ENCODE measurements at regions of chr1 and their contacts with region 1.

Region 1: DNA sequence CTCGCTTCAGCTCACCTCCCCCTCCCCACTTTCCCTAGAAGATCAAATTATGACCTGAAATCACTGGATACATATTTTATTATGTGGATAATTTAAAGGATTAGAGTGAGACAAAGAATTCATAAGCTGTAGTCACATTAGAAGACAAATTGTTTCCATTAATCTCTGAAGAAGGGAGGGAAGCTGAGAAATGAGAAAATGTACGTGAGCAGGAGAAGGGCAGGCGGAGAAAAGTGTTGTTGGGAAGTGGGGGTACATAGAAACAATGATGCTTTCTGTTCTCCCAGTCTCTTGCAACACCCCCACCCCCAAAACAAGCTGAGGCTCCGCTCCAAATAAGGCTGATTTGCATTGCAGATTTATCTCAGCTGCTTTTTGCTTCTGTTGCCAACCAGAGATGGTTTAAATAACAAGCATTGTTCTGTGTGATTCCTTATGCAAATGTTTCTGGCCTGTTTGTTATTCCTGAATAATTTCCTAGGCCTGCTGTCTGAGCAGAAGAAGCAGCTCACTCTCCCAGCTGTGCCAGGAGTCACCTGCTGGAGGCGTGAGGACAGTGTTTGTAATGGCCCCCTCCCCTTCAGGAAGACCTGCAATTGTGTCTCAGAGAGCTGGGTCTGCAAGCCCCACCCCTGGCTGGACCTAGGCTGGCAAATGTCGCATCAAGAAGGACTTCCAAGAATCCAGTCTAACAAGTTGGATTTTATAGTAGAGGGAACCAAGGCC is 121.8 kb upstream of the TNR start:
- DNase-seq: peak; percentile 69
- ATAC-seq: peak; percentile 85
- H3K4me3 Mint-ChIP-seq: peak overlapping the region; percentile 26
- H3K27ac Mint-ChIP-seq: peak overlapping the region; percentile 82
- H3K4me1 Mint-ChIP-seq: peaks cover 81% of the 10 kb centered on the region
- H3K27me3 Mint-ChIP-seq: peaks cover 19% of the 10 kb centered on the region
- CTCF ChIP-seq: no peak

Region 2: DNA sequence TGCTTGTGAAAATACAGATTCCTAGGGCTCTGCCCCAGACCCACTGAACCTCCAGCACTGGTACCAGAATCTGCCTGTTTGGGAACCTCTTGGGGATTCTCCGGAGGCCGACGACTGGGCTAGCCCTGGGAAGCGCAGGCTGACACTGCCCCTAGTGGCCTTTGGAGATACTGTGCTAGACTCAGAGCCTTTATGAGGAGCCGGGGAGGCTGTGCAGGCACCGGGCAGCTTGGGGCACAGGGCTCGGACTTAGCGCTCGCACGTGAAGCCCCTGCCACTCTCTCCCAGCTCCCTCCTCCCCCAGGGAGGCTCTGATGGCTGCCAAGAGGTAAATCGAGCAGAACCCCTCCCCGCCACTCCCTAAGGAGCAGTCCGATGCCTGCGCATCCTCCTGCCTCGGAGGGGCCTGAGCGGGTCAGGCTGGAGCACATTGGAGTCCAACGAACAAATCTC is 22.8 kb after region 1 on chr1:
- CTCF ChIA-PET with region 1: interaction called, 35 read pairs
- POLR2A ChIA-PET with region 1: no interaction called
- DNase-seq: peak; percentile 87
- ATAC-seq: peak; percentile 98
- H3K4me3 Mint-ChIP-seq: peak overlapping the region; percentile 58
- H3K27ac Mint-ChIP-seq: no peak overlapping the region
- H3K4me1 Mint-ChIP-seq: peaks cover 15% of the 10 kb centered on the region
- H3K27me3 Mint-ChIP-seq: peaks cover 96% of the 10 kb centered on the region
- CTCF ChIP-seq: peak; percentile 83

Region 3: GRCh38 chr1:176033881-176034280 is 168.7 kb after region 1 on chr1:
- CTCF ChIA-PET with region 1: no interaction called
- POLR2A ChIA-PET with region 1: no interaction called
- DNase-seq: no peak
- ATAC-seq: no peak
- H3K4me3 Mint-ChIP-seq: no peak overlapping the region
- H3K27ac Mint-ChIP-seq: no peak overlapping the region
- H3K4me1 Mint-ChIP-seq: no peaks in the 10 kb centered on the region
- H3K27me3 Mint-ChIP-seq: no peaks in the 10 kb centered on the region
- CTCF ChIP-seq: no peak

Measured in WTC11 (cell line).